ENCODE measurements at regions of chr7 and their contacts with region 1.

Region 1: GRCh38 chr7:148962823-148963582 is 65.3 kb downstream of the PDIA4 start:
- H3K4me3 ChIP-seq: peak overlapping the region; percentile 63
- H3K27ac ChIP-seq: no peak overlapping the region
- H3K4me1 ChIP-seq: no peaks in the 10 kb centered on the region
- CTCF ChIP-seq: peak; percentile 96

Region 2: GRCh38 chr7:148385009-148385682 is 577.9 kb before region 1 on chr7:
- CTCF ChIA-PET with region 1: no interaction called
- POLR2A ChIA-PET with region 1: no interaction called
- H3K4me3 ChIP-seq: no peak overlapping the region
- H3K27ac ChIP-seq: no peak overlapping the region
- H3K4me1 ChIP-seq: no peaks in the 10 kb centered on the region
- CTCF ChIP-seq: no peak

Region 3: GRCh38 chr7:148503875-148504487 is 459.0 kb before region 1 on chr7:
- CTCF ChIA-PET with region 1: interaction called, 11 read pairs
- POLR2A ChIA-PET with region 1: no interaction called
- H3K4me3 ChIP-seq: no peak overlapping the region
- H3K27ac ChIP-seq: no peak overlapping the region
- H3K4me1 ChIP-seq: no peaks in the 10 kb centered on the region
- CTCF ChIP-seq: peak; percentile 14; the same call in 1 of the 2 replicates

Region 4: GRCh38 chr7:148575640-148576411 is 387.2 kb before region 1 on chr7:
- CTCF ChIA-PET with region 1: interaction called, 12 read pairs
- POLR2A ChIA-PET with region 1: no interaction called
- H3K4me3 ChIP-seq: no peak overlapping the region
- H3K27ac ChIP-seq: no peak overlapping the region
- H3K4me1 ChIP-seq: no peaks in the 10 kb centered on the region
- CTCF ChIP-seq: peak; percentile 44; the same call in 1 of the 2 replicates

Region 5: DNA sequence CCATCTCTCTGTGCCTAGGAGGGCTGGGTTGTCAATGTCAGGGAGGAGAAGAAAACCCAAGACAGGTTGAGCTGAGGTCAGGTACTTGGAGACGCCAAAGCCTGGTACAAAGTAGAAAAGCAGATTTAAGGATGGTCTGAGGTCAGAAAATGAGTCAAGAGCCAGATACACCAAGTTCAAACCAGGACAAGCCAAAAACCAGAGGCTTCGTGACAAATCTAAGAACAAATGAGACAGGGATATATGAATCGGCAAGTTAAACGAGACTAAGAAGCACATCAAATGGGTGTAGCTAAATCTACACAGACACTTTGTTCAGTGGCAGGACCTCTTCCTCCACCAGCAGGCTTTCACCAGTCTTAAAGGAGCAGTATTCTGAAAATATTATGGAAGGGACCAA is 338.3 kb before region 1 on chr7:
- CTCF ChIA-PET with region 1: no interaction called
- POLR2A ChIA-PET with region 1: no interaction called
- H3K4me3 ChIP-seq: no peak overlapping the region
- H3K27ac ChIP-seq: no peak overlapping the region
- H3K4me1 ChIP-seq: no peaks in the 10 kb centered on the region
- CTCF ChIP-seq: no peak

Region 6: DNA sequence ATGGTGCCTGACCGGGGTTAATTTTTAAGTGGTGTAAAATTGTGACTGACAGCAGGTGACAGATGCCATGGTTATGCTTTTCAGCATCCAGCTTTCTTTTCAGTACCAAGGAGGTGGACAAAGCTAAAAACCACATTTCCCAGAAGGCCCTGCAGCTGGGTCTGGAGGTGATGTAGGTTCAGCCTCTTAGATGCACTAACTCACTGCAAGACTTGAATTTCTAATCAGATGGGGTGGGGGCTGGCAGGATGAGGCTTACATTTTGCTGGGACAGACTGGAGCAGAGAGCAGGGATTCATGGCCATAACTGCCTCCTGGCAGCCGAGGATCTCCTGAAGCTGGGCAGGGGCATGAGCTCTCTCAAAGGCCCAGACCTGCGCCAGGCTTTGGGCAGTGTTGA is 12.9 kb after region 1 on chr7:
- CTCF ChIA-PET with region 1: interaction called, 10 read pairs
- POLR2A ChIA-PET with region 1: no interaction called
- H3K4me3 ChIP-seq: no peak overlapping the region
- H3K27ac ChIP-seq: no peak overlapping the region
- H3K4me1 ChIP-seq: no peaks in the 10 kb centered on the region
- CTCF ChIP-seq: no peak

Measured in HEK293 (cell line).